AG04450 (cell line): ENCODE measurements at regions of chr2 and their contacts with region 1.

Region 1: DNA sequence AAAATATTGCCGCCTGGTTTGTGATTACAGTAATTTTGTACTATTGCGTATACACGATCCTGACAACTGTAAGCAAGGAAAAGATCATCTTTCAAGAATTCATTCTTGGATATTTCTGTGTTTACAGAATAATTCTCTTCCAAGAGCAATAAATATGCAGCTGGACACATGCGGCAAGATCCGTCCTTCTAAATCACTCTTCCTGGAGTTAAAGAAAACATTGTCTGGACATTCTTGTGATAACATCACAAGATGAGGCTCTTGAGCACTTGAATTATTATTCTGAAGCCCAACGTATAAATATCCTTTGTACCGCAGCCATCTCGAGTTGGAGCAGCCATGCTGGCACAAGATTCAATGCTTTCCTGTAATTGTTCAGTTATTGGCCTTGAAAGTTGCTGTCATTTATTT is 9.9 kb downstream of the FHL2 start:
- DNase-seq: peak; percentile 91
- H3K4me3 ChIP-seq: no peak overlapping the region
- H3K27ac ChIP-seq: peak overlapping the region; percentile 93
- H3K27me3 ChIP-seq: no peaks in the 10 kb centered on the region
- CTCF ChIP-seq: no peak

Region 2: DNA sequence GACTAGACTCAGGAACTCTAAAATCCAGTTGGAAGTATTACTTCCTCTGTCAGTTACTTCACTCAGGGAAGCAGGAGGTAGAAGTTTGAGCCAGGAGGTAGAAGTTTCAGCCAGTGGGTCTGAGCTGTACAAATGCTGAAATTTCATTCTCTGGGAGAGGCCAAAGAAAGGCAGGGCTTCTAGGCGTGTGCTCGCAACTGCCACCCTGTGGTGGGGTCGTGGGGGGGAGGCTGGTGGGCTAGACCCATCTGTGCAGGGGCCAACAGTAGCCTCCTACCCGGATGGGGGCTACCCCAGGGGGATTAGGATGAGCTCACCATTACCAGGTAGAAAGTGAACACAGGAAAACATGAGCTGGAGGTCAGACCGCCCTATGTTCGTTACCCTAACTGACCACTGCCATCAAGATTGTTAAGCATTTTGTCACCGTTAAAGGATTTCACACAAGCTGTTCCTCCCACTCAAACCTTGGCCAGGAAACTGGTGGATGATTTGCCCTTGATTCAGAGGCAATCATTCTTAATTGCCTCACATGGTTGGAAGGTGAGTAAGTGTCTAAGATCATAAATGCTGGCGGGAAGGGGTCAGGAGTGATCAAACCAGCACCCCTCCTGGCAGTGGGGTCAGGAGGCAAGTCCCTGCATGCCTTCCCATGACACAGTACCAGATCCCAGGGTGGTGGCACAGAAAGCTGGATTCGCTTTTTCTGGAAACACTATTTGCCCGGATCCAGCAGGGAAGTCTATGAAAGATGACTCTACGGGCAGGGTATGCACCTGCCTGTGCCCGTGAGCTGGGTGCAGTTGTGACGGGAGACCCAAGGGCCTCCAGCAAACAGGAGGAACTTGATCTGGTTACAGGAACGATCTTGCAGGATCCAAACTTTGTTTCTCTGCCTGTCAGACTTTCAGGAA is 15.1 kb after region 1 on chr2:
- CTCF ChIA-PET with region 1: interaction called, 11 read pairs
- POLR2A ChIA-PET with region 1: interaction called, 26 read pairs
- DNase-seq: peak; percentile 62
- H3K4me3 ChIP-seq: no peak overlapping the region
- H3K27ac ChIP-seq: peak overlapping the region; percentile 81
- H3K27me3 ChIP-seq: no peaks in the 10 kb centered on the region
- CTCF ChIP-seq: peak; percentile 51

Region 3: GRCh38 chr2:105409717-105410116 is 20.7 kb after region 1 on chr2:
- CTCF ChIA-PET with region 1: interaction called, 11 read pairs
- POLR2A ChIA-PET with region 1: interaction called, 13 read pairs
- DNase-seq: peak; percentile 66
- H3K4me3 ChIP-seq: no peak overlapping the region
- H3K27ac ChIP-seq: no peak overlapping the region
- H3K27me3 ChIP-seq: no peaks in the 10 kb centered on the region
- CTCF ChIP-seq: no peak

Region 4: DNA sequence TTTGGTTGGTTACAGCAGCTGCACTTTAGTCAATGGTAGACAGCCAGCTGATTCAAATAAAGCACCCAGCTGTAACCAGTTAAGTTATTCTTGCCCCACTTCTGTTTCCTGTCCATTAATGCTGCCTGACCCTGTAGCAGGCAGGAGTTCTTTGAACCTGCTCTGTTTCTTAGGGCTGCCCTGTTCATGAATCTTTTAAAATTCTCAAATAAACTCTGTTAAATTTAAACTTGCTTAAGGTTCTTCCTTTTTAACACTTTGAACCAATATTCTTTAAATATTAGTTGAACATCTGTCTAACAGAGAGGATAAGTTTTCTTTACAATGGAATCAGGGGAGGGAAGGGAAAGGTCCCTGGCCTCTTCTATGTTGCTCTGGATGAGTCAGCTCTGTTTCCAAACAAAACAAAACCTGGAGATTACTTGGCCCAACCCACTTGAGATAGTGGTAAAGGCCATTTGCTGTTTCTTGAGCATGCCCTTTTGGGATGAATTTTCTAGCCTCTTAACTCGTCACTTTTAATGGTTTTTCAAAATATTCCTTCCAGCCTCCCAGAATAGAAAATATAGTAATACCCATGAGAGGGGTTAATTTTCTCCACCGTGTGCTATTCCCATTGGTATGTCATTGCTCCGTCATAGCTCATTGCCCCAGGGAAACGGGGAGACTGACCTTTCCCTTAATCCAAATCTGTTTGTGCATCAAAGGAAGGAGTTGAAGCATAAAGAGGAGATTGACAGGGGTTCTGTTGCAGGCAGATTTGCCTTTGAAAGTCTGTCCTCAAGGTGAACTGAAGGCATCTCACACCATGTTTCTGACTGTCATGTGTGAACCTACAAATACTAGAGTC is 122.0 kb after region 1 on chr2:
- CTCF ChIA-PET with region 1: no interaction called
- POLR2A ChIA-PET with region 1: no interaction called
- DNase-seq: no peak
- H3K4me3 ChIP-seq: no peak overlapping the region
- H3K27ac ChIP-seq: no peak overlapping the region
- H3K27me3 ChIP-seq: peaks cover 32% of the 10 kb centered on the region
- CTCF ChIP-seq: no peak

Region 5: DNA sequence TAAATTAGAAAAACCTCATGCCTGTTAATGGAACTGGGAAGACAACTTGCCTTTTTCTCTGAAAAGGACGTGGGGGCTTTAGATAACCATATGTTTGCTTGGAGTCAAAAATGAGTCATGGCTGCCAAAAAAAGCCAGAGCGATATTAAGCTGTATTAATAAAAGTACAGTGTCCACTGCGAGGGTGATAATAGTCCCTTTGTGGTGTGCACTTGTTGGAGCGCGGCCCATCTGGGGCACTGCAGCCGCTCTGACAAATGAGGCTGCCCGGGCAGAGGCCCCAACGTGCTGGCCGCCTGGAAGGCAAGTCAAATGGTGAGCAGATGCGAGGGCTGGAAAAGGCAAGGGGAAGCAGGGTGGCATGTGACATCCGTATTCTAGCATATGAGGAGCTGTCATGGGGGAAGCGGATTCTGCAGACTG is 252.4 kb after region 1 on chr2:
- CTCF ChIA-PET with region 1: no interaction called
- POLR2A ChIA-PET with region 1: no interaction called
- DNase-seq: no peak
- H3K4me3 ChIP-seq: no peak overlapping the region
- H3K27ac ChIP-seq: no peak overlapping the region
- H3K27me3 ChIP-seq: peaks cover 14% of the 10 kb centered on the region
- CTCF ChIP-seq: no peak

Region 6: DNA sequence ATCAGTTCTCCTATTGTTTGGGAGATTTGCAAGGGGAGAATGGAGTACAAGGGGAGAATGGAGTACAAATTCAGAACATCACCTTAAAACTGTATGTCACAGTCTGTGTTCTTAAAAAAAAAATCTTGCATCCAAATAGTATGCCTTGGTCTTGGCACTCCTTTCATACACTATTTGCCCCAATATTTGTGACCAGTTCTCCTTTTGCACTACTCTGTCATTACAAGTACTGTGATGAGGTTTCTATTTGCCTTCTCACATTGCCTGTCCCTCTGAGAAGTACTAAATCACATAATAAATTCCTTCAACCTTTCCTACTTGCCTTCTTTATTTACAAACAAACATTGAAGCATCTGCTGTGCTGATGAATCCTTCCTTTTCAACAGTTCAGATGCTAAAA is 319.7 kb after region 1 on chr2:
- CTCF ChIA-PET with region 1: no interaction called
- POLR2A ChIA-PET with region 1: no interaction called
- DNase-seq: no peak
- H3K4me3 ChIP-seq: no peak overlapping the region
- H3K27ac ChIP-seq: no peak overlapping the region
- H3K27me3 ChIP-seq: peaks cover 3% of the 10 kb centered on the region
- CTCF ChIP-seq: no peak